CD4-positive, alpha-beta memory T cell (primary cell): ENCODE measurements at regions of chr1 and their contacts with region 1.

Region 1: GRCh38 chr1:27556781-27557595 is 47.0 kb downstream of the AHDC1 start:
- DNase-seq: peak; percentile 65 to 70 (median 69)
- H3K4me3 ChIP-seq: no peak overlapping the region
- H3K4me3 Mint-ChIP-seq: peak overlapping the region; percentile 18 to 78 (median 45)
- H3K27ac ChIP-seq: no peak overlapping the region
- H3K27ac Mint-ChIP-seq: peak overlapping the region in 5 of 7 donors; percentile 49 to 77 (median 59)
- H3K4me1 ChIP-seq: peaks cover 17% of the 10 kb centered on the region
- H3K4me1 Mint-ChIP-seq: peaks cover 18 to 44% (median 28%) of the 10 kb centered on the region in 4 donors
- H3K27me3 ChIP-seq: no peaks in the 10 kb centered on the region
- H3K27me3 Mint-ChIP-seq: no peaks in the 10 kb centered on the region

Region 2: GRCh38 chr1:27525296-27526272 is 31.4 kb before region 1 on chr1:
- CTCF ChIA-PET with region 1: interaction called, 36 read pairs
- POLR2A ChIA-PET with region 1: interaction called, 13 read pairs
- intact Hi-C with region 1: loop called (anchors 5 kb)
- DNase-seq: peak; percentile 28 to 54 (median 43)
- H3K4me3 ChIP-seq: peak overlapping the region; percentile 22 to 50
- H3K4me3 Mint-ChIP-seq: peak overlapping the region; percentile 36 to 92 (median 77)
- H3K27ac ChIP-seq: peak overlapping the region; percentile 62
- H3K27ac Mint-ChIP-seq: peak overlapping the region; percentile 77 to 96 (median 93)
- H3K4me1 ChIP-seq: peaks cover 81% of the 10 kb centered on the region
- H3K4me1 Mint-ChIP-seq: peaks cover 53 to 78% (median 66%) of the 10 kb centered on the region in 4 donors
- H3K27me3 ChIP-seq: no peaks in the 10 kb centered on the region
- H3K27me3 Mint-ChIP-seq: no peaks in the 10 kb centered on the region

Region 3: DNA sequence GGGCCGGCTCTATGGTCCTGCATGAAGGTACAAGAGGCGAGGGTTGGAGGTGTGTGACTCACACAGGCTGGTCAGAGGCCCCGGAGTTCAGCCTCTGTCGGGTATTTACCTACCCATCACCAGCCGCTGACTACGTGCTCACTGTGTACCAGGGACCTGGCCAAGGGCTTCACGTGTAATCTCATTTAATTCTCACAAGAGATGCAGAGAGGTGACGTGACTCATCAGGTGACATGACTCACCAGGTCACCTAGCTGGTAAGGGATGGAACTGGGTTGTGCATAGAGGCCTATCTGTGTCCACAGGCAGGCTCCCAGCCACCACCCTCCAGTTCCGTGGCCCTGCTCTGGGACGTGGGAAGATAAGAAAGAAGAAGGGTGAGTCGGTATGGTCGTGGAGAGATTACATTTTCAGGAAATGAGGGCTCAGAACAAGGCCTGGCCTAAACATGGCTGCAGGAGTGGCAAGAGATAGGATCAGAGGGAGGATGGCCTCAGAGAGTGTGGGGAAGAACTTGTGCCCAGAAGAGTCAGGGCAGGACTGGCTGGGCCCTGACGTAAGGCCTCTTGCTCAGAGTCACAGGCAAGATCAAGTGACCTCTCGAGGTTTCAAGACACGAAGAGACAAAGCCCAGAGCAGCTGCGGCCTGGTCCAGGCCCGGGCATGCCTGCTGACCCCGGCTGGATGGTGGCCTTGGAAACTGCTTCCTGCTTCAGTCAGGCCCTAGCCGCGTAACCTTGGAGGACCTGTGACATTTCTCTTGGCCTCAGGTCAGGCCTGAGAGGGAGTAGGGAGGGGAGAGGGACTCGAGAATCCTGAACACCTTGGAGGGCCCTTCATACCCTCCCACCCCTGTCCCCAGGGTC is 14.3 kb before region 1 on chr1:
- CTCF ChIA-PET with region 1: interaction called, 27 read pairs
- POLR2A ChIA-PET with region 1: no interaction called
- intact Hi-C with region 1: no loop called
- DNase-seq: peak in 1 of 5 donors; percentile 33
- H3K4me3 ChIP-seq: no peak overlapping the region
- H3K4me3 Mint-ChIP-seq: no peak overlapping the region
- H3K27ac ChIP-seq: no peak overlapping the region
- H3K27ac Mint-ChIP-seq: peak overlapping the region in 3 of 7 donors; percentile 15 to 82 (median 77)
- H3K4me1 ChIP-seq: peaks cover 4% of the 10 kb centered on the region
- H3K4me1 Mint-ChIP-seq: peaks cover 2 to 13% (median 11%) of the 10 kb centered on the region in 4 donors
- H3K27me3 ChIP-seq: no peaks in the 10 kb centered on the region
- H3K27me3 Mint-ChIP-seq: no peaks in the 10 kb centered on the region

Region 4: DNA sequence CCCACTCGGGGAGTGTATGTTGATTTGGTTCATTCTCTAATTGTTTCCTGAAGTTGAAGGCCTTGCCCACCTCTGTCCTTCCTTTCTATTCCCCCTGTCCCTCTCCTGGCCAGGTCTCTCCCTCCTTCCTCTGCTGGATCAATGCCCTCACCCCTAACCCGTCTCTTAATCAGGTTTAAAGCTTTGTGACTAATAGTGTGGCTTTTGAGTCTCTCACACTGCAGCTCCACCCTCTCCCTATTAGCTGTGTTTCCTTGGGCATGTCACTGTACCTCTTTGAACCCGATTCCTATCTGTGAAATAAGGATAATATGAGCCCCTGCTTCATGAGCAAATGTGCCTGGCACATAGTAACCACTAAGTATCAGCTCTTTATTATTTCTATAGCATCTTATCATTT is 26.5 kb after region 1 on chr1:
- CTCF ChIA-PET with region 1: interaction called, 13 read pairs
- POLR2A ChIA-PET with region 1: no interaction called
- intact Hi-C with region 1: no loop called
- DNase-seq: no peak
- H3K4me3 ChIP-seq: no peak overlapping the region
- H3K4me3 Mint-ChIP-seq: no peak overlapping the region
- H3K27ac ChIP-seq: no peak overlapping the region
- H3K27ac Mint-ChIP-seq: peak overlapping the region in 3 of 7 donors; percentile 8 to 48 (median 34)
- H3K4me1 ChIP-seq: no peaks in the 10 kb centered on the region
- H3K4me1 Mint-ChIP-seq: peaks cover 0 to 8% (median 6%) of the 10 kb centered on the region in 4 donors
- H3K27me3 ChIP-seq: no peaks in the 10 kb centered on the region
- H3K27me3 Mint-ChIP-seq: peaks cover 2% of the 10 kb centered on the region in 2 donors

Region 5: DNA sequence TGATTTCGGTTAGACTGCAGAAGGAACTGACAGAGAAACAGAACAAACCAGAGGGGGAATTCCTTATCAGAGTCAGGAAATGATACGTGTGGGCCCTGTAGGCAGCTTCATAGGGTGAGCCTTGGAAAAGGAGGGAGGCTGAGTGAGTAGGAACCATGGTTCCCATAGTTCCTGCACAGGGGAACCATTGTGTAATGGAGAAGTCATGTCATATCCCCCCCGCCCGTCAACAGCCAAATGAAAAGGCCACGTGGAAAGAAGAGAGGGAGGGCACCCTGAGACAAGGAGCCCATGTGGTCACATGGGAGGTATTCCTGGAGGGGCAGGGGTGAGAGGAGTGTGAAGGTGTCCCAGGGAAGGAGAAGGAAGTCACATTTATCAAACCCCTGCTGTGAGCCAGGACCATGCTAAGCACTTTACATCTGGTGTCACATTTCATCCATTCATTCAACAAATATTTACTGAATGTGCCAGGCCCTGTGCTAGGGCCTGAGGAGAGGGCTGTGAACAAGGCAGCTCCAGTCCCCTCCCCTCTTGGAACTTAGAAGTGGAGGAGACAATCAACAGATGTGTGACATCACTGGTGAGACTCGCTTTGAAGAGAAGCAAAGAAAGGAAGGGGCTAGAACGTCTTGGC is 93.7 kb after region 1 on chr1:
- CTCF ChIA-PET with region 1: no interaction called
- POLR2A ChIA-PET with region 1: no interaction called
- intact Hi-C with region 1: no loop called
- DNase-seq: no peak
- H3K4me3 ChIP-seq: no peak overlapping the region
- H3K4me3 Mint-ChIP-seq: no peak overlapping the region
- H3K27ac ChIP-seq: no peak overlapping the region
- H3K27ac Mint-ChIP-seq: peak overlapping the region in 5 of 7 donors; percentile 10 to 79 (median 25)
- H3K4me1 ChIP-seq: peaks cover 8% of the 10 kb centered on the region
- H3K4me1 Mint-ChIP-seq: peaks cover 5 to 14% (median 10%) of the 10 kb centered on the region in 4 donors
- H3K27me3 ChIP-seq: no peaks in the 10 kb centered on the region
- H3K27me3 Mint-ChIP-seq: no peaks in the 10 kb centered on the region

Region 6: GRCh38 chr1:27686223-27687018 is 129.4 kb after region 1 on chr1:
- CTCF ChIA-PET with region 1: no interaction called
- POLR2A ChIA-PET with region 1: no interaction called
- intact Hi-C with region 1: no loop called
- DNase-seq: no peak
- H3K4me3 ChIP-seq: no peak overlapping the region
- H3K4me3 Mint-ChIP-seq: no peak overlapping the region
- H3K27ac ChIP-seq: no peak overlapping the region
- H3K27ac Mint-ChIP-seq: no peak overlapping the region
- H3K4me1 ChIP-seq: no peaks in the 10 kb centered on the region
- H3K4me1 Mint-ChIP-seq: peaks cover 0 to 3% (median under 1%) of the 10 kb centered on the region in 4 donors
- H3K27me3 ChIP-seq: no peaks in the 10 kb centered on the region
- H3K27me3 Mint-ChIP-seq: peaks cover 0 to 2% of the 10 kb centered on the region in 2 donors

Region 7: DNA sequence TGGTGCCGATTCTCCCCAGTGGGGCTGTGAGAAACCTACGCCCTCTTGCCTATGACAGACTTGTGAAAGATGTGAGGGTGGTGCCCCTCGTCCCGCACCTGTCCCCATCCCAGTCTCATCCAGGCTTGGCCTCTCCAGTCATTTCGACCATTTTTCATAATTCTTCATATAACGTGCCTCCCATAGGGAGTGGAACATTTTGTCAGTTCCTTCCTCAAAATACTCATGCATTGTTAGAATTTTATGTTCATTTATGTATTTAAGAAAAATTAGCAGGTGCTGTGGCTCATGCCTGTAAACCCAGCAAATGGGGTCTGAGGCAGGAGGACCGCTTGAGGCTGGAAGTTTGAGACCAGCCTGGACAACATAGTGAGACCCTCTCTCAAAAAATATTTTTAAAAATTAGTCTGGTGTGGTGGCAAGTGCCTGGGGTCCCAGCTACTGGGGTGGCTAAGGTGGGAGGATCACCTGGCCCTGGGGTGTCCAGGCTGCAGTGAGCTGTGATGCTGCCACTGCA is 358.2 kb after region 1 on chr1:
- CTCF ChIA-PET with region 1: no interaction called
- POLR2A ChIA-PET with region 1: no interaction called
- intact Hi-C with region 1: no loop called
- DNase-seq: no peak
- H3K4me3 ChIP-seq: peak overlapping the region in 1 of 2 donors; percentile 29
- H3K4me3 Mint-ChIP-seq: peak overlapping the region; percentile 95 to 100 (median 99)
- H3K27ac ChIP-seq: peak overlapping the region; percentile 88
- H3K27ac Mint-ChIP-seq: peak overlapping the region; percentile 97 to 100 (median 99)
- H3K4me1 ChIP-seq: peaks cover 11% of the 10 kb centered on the region
- H3K4me1 Mint-ChIP-seq: peaks cover 12 to 29% (median 20%) of the 10 kb centered on the region in 4 donors
- H3K27me3 ChIP-seq: no peaks in the 10 kb centered on the region
- H3K27me3 Mint-ChIP-seq: no peaks in the 10 kb centered on the region

Region 8: DNA sequence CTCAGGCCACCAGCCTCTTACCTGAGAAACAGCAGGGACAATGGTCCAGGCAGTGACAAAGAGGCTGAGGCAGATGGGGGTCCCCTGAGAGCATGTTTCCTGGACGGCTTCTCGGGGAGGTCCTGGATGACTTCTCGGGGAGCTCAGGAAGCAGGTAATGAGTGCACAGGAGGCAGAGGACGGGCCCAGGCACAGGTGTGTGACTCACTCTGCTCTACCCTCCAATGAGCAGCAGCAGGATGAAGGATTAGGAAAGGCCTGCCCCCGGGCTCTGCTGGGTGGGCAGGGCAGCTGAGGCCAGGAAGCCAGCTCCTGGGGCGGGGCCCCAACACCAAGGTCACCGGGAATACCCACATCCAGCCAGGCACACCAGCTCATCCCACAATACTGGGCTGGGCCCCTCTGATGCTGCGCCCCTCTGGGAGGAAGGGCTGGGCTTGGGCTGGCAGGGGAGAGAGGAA is 636.7 kb after region 1 on chr1:
- CTCF ChIA-PET with region 1: no interaction called
- POLR2A ChIA-PET with region 1: no interaction called
- intact Hi-C with region 1: no loop called
- DNase-seq: no peak
- H3K4me3 ChIP-seq: no peak overlapping the region
- H3K4me3 Mint-ChIP-seq: no peak overlapping the region
- H3K27ac ChIP-seq: no peak overlapping the region
- H3K27ac Mint-ChIP-seq: no peak overlapping the region
- H3K4me1 ChIP-seq: peaks cover 25% of the 10 kb centered on the region
- H3K4me1 Mint-ChIP-seq: peaks cover 11 to 27% (median 20%) of the 10 kb centered on the region in 4 donors
- H3K27me3 ChIP-seq: no peaks in the 10 kb centered on the region
- H3K27me3 Mint-ChIP-seq: no peaks in the 10 kb centered on the region